GM12878 (cell line): ENCODE measurements at regions of chr1 and their contacts with region 1.

Region 1: DNA sequence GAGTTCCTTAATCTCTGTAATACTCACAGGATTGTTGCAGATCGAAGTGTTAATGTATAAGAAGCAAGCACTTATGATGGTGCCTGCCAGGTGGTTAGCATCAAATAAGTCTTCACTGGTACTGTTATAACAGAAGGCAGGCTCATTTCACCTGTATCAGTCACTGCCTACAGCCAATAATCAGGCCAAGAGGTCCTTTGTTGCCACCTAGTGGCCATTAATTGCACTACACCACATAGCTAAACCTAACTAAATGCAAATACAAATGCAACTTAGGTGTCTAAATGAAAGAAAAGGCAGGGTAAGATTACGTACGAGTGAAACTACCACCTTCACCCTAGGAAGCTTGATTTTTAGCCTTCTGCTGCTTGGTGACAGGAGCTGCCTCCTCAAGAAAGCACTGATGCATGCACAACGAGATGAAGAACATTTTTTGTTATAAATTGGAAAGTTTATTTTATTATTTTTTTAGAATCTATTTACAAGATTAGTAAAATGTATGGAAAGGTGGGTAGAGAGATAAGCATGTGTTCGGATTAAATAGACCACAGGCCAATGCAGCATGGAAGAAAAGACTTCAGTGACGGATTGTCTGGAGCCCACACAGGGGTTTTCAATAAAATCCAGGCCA is 334.8 kb upstream of the CAMK1G start:
- DNase-seq: peak; percentile 30
- ATAC-seq: peak; percentile 91
- H3K4me3 ChIP-seq: no peak overlapping the region
- H3K27ac ChIP-seq: no peak overlapping the region
- H3K4me1 ChIP-seq: no peaks in the 10 kb centered on the region
- H3K27me3 ChIP-seq: no peaks in the 10 kb centered on the region; a peak in 1 of 4 replicates
- CTCF ChIP-seq: peak; percentile 81 to 93 (median 85); a peak in 5 of 6 replicates
- EP300 ChIP-seq: no peak
- POLR2A ChIP-seq: no peak
- RAD21 ChIP-seq: peak; percentile 90

Region 2: DNA sequence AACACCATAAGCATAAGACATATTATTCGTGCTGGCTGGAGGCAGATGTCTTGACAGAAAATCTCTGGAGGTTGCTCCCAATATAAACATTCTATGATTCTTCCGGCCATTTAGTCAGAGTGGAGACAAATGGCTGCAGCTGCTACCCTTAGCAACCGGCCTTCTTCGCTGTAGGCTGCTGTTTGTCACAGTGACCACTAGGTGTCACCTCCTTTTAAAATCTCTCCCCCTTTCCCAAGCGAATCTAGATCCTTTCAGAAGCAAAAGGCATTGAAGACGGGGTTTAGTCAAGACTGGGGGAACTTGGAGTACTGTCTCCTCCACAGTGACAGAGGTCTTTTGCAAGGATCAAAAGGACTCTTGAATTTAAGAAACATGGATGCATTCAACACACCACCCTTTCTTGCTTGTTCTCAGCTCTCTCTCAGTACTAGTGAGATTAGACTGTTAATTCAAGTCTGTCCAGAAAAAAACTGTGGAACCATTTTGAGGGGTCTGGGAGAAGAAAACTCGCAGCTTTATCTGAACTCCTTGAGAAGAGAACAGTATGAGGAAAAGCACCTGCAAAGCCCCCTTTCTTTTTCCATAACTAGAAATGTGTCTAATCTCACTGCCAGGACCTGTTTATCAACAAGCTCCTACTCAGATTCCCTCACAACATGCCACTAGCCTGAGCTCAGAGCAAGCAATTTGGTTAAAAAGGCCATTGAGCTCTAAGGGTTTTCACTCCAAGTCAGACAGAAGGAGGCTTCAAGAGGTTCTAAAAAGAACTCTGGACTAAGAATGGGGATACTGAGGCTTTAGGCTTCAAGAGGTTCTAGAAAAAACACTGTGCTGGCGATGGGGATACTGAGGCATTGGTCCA is 596.2 kb before region 1 on chr1:
- CTCF ChIA-PET with region 1: interaction called, 21 read pairs
- POLR2A ChIA-PET with region 1: no interaction called
- RAD21 ChIA-PET with region 1: interaction called, 5 read pairs
- SMC1A ChIA-PET with region 1: interaction called, 3 read pairs
- in situ Hi-C with region 1: no loop called
- intact Hi-C with region 1: loop called (anchors 1 kb)
- DNase-seq: peak; percentile 8
- ATAC-seq: peak; percentile 94
- H3K4me3 ChIP-seq: no peak overlapping the region
- H3K27ac ChIP-seq: no peak overlapping the region
- H3K4me1 ChIP-seq: no peaks in the 10 kb centered on the region
- H3K27me3 ChIP-seq: no peaks in the 10 kb centered on the region
- CTCF ChIP-seq: peak; percentile 73 to 83 (median 77)
- EP300 ChIP-seq: no peak
- POLR2A ChIP-seq: no peak
- RAD21 ChIP-seq: peak; percentile 65

Region 3: GRCh38 chr1:209076688-209077087 is 172.1 kb before region 1 on chr1:
- CTCF ChIA-PET with region 1: interaction called, 12 read pairs
- POLR2A ChIA-PET with region 1: no interaction called
- RAD21 ChIA-PET with region 1: interaction called, 4 read pairs
- SMC1A ChIA-PET with region 1: interaction called, 4 read pairs
- in situ Hi-C with region 1: no loop called
- intact Hi-C with region 1: loop called (anchors 1 kb)
- DNase-seq: no peak
- ATAC-seq: peak; percentile 74
- H3K4me3 ChIP-seq: no peak overlapping the region
- H3K27ac ChIP-seq: no peak overlapping the region
- H3K4me1 ChIP-seq: no peaks in the 10 kb centered on the region
- H3K27me3 ChIP-seq: no peaks in the 10 kb centered on the region
- CTCF ChIP-seq: peak; percentile 45 to 65 (median 60)
- EP300 ChIP-seq: no peak
- POLR2A ChIP-seq: no peak
- RAD21 ChIP-seq: peak; percentile 87

Region 4: GRCh38 chr1:209207701-209208286 is 41.0 kb before region 1 on chr1:
- CTCF ChIA-PET with region 1: interaction called, 32 read pairs
- POLR2A ChIA-PET with region 1: no interaction called
- RAD21 ChIA-PET with region 1: interaction called, 5 read pairs
- SMC1A ChIA-PET with region 1: interaction called, 4 read pairs
- in situ Hi-C with region 1: no loop called
- intact Hi-C with region 1: no loop called
- DNase-seq: no peak
- ATAC-seq: peak; percentile 81
- H3K4me3 ChIP-seq: no peak overlapping the region
- H3K27ac ChIP-seq: no peak overlapping the region
- H3K4me1 ChIP-seq: no peaks in the 10 kb centered on the region
- H3K27me3 ChIP-seq: peaks cover 4 to 6% of the 10 kb centered on the region in 2 experiments; a peak in 3 of 4 replicates
- CTCF ChIP-seq: peak; percentile 51 to 74 (median 61); a peak in 5 of 6 replicates
- EP300 ChIP-seq: no peak
- POLR2A ChIP-seq: no peak
- RAD21 ChIP-seq: peak; percentile 84

Region 5: DNA sequence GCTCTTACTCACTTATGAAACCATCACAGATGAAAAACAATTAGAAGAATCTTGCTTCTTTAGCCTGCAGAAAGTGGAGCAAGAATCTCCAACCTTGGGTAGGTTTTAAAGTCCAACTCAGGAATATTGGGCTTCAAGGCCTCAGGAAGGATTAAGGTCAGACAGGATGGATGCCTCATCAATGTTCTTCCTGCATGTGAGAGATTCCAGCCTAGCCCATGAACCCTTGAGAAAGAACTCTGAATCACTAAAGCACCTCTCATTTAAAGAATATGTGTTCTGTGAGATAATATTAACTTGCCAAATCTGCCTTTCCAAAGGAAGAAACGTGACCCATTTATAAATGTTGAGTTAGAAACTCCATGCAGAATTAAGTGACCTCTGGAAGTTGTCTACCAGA is 10.4 kb before region 1 on chr1:
- CTCF ChIA-PET with region 1: interaction called, 13 read pairs
- POLR2A ChIA-PET with region 1: no interaction called
- RAD21 ChIA-PET with region 1: no interaction called
- SMC1A ChIA-PET with region 1: interaction called, 3 read pairs
- in situ Hi-C with region 1: no loop called
- intact Hi-C with region 1: no loop called
- DNase-seq: no peak
- ATAC-seq: no peak
- H3K4me3 ChIP-seq: no peak overlapping the region
- H3K27ac ChIP-seq: no peak overlapping the region
- H3K4me1 ChIP-seq: no peaks in the 10 kb centered on the region
- H3K27me3 ChIP-seq: no peaks in the 10 kb centered on the region
- CTCF ChIP-seq: no peak
- EP300 ChIP-seq: no peak
- POLR2A ChIP-seq: no peak
- RAD21 ChIP-seq: no peak

Region 6: GRCh38 chr1:209260136-209260535 is 11.4 kb after region 1 on chr1:
- CTCF ChIA-PET with region 1: interaction called, 24 read pairs
- POLR2A ChIA-PET with region 1: no interaction called
- RAD21 ChIA-PET with region 1: interaction called, 3 read pairs
- SMC1A ChIA-PET with region 1: interaction called, 3 read pairs
- in situ Hi-C with region 1: no loop called
- intact Hi-C with region 1: no loop called
- DNase-seq: no peak
- ATAC-seq: no peak
- H3K4me3 ChIP-seq: no peak overlapping the region
- H3K27ac ChIP-seq: no peak overlapping the region
- H3K4me1 ChIP-seq: no peaks in the 10 kb centered on the region
- H3K27me3 ChIP-seq: no peaks in the 10 kb centered on the region
- CTCF ChIP-seq: no peak
- EP300 ChIP-seq: no peak
- POLR2A ChIP-seq: no peak
- RAD21 ChIP-seq: no peak